Psoas muscle (tissue), 8 donors: ENCODE measurements at regions of chr17 and their contacts with region 1.

Region 1: GRCh38 chr17:39621523-39622379 is 5.0 kb upstream of the PPP1R1B start:
- DNase-seq: peak; percentile 82 to 91
- ATAC-seq: peak; percentile 83 to 93 (median 89)
- H3K4me3 ChIP-seq: no peak overlapping the region
- H3K27ac ChIP-seq: no peak overlapping the region
- H3K4me1 ChIP-seq: peaks cover 1% of the 10 kb centered on the region
- H3K27me3 ChIP-seq: peaks cover 0 to 27% (median 8%) of the 10 kb centered on the region in 3 donors
- CTCF ChIP-seq: peak; percentile 100

Region 2: GRCh38 chr17:37659925-37660324 is 1961.8 kb before region 1 on chr17:
- intact Hi-C with region 1: no loop called
- DNase-seq: no peak
- ATAC-seq: no peak
- H3K4me3 ChIP-seq: no peak overlapping the region
- H3K27ac ChIP-seq: no peak overlapping the region
- H3K4me1 ChIP-seq: no peaks in the 10 kb centered on the region
- H3K27me3 ChIP-seq: no peaks in the 10 kb centered on the region
- CTCF ChIP-seq: no peak

Region 3: DNA sequence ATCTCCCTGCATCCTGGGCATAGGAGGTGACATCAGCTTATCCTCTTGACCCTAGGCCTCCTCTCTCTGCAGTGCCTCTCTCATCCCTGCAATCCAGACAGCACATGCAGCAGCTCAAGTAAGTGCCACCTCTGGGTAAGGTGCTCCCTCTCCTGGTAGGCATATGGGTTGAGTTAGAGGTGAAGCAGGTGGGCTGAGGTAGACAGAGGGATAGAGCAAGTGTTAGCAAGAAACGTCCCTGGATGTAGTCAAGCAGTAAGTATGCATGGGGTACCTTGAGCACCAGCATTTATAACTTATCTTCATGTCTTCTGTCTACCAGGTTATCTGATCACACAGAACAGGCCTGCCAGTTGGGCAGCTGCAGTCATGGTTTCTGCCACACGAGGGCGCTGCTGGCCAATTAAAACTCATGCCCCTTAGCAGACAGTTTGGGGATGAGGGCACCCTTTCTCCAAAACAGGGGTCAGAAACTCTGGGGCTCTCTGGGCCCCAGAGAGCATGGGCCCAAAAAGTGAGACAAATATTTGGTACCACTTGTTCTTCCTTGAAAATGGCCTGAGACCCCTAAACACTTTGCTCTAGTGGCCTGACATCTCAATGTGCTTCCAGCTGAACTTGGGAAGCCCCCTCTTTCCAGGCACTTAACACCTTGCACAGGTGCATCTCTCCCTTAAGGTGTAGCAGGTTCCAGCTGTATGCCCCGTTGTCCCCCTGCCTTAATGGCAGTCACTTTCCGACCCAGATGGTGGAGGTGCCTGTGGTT is 73.9 kb before region 1 on chr17:
- intact Hi-C with region 1: loop called (anchors 2 to 5 kb)
- DNase-seq: peak; percentile 62 to 83
- ATAC-seq: peak; percentile 55 to 87 (median 76)
- H3K4me3 ChIP-seq: no peak overlapping the region
- H3K27ac ChIP-seq: no peak overlapping the region
- H3K4me1 ChIP-seq: peaks cover 8% of the 10 kb centered on the region
- H3K27me3 ChIP-seq: no peaks in the 10 kb centered on the region
- CTCF ChIP-seq: peak; percentile 88

Region 4: DNA sequence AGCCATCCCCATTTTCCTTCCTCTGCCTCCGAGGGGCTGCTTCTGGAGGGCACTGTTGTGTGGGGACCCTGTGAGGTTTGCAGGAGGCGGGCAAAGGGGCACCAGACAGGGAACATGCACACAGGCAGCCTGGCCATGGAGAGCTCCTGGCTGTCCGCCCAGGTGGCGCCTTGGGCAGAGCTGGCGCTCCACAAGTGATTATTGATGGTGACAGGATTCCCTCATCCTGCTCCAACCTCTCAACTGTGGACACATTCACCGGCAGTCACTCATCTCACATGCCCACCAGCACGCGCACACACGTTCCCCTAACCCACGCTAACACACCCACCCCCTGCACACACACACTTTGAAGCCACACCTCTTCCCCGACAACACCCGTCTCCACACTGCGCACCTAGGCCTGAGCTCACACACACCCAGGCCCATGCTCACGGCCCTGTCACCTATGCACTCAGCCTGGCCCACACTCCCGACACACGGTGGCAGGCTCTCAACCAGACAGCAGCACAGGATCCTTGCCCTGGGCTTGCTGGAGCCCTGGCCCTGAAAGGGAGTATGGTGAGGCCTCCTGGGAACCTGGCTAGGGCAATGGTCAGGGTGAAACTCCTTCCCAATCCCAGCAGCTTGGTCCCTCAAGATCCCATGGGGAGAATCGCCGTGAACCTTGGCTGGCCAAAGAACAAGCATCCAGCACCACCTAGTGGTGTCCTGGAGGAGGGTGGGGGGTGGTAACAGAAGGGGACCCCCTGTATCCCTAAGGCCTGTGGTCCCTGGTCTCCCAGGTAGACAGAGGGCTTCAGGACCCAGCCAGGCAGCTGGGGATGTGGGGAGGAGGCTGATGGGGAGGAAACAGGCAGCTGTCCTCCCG is 50.1 kb after region 1 on chr17:
- intact Hi-C with region 1: loop called (anchors 2 to 5 kb)
- DNase-seq: peak in 1 of 2 donors; percentile 70
- ATAC-seq: peak; percentile 26 to 41 (median 32)
- H3K4me3 ChIP-seq: no peak overlapping the region
- H3K27ac ChIP-seq: peak overlapping the region; percentile 96
- H3K4me1 ChIP-seq: peaks cover 44% of the 10 kb centered on the region
- H3K27me3 ChIP-seq: no peaks in the 10 kb centered on the region
- CTCF ChIP-seq: peak; percentile 56

Region 5: GRCh38 chr17:39730095-39730921 is 108.6 kb after region 1 on chr17 and contains the start of gene MIEN1:
- intact Hi-C with region 1: loop called in 1 of 2 experiments (anchors 5 kb)
- DNase-seq: peak; percentile 92 to 96
- ATAC-seq: peak; percentile 97 to 99 (median 98)
- H3K4me3 ChIP-seq: peak within 1 kb of the TSS; percentile 85
- H3K27ac ChIP-seq: peak within 1 kb of the TSS; percentile 89
- H3K4me1 ChIP-seq: peaks cover 8% of the 10 kb centered on the region
- H3K27me3 ChIP-seq: no peaks in the 10 kb centered on the region
- CTCF ChIP-seq: peak; percentile 92
- total RNA-seq, gene MIEN1: 28.2 to 44.3 (median 36.2) TPM

Region 6: GRCh38 chr17:39754161-39754951 is 132.6 kb after region 1 on chr17:
- intact Hi-C with region 1: loop called (anchors 1 to 5 kb)
- DNase-seq: peak; percentile 92 to 96
- ATAC-seq: peak; percentile 93 to 95 (median 94)
- H3K4me3 ChIP-seq: peak overlapping the region; percentile 84
- H3K27ac ChIP-seq: peak overlapping the region; percentile 81
- H3K4me1 ChIP-seq: no peaks in the 10 kb centered on the region
- H3K27me3 ChIP-seq: peaks cover 0 to 3% (median 0%) of the 10 kb centered on the region in 3 donors
- CTCF ChIP-seq: peak; percentile 97

Region 7: GRCh38 chr17:39863918-39864746 is 242.4 kb after region 1 on chr17 and contains the start of gene IKZF3:
- intact Hi-C with region 1: loop called in 1 of 2 experiments (anchors 10 kb)
- DNase-seq: peak; percentile 46 to 66
- ATAC-seq: peak; percentile 65 to 80 (median 74)
- H3K4me3 ChIP-seq: peak within 1 kb of the TSS; percentile 44
- H3K27ac ChIP-seq: no peak within 1 kb of the TSS
- H3K4me1 ChIP-seq: peaks cover 8% of the 10 kb centered on the region
- H3K27me3 ChIP-seq: peaks cover 7 to 81% (median 24%) of the 10 kb centered on the region in 3 donors
- CTCF ChIP-seq: no peak
- total RNA-seq, gene IKZF3: 0.12 to 0.82 (median 0.57) TPM